ENCODE measurements at regions of chr4 and their contacts with region 1.

Region 1: GRCh38 chr4:164115236-164115635 is 620.7 kb downstream of the TMA16 start:
- DNase-seq: no peak
- ATAC-seq: no peak
- H3K4me3 ChIP-seq: no peak overlapping the region
- H3K4me3 Mint-ChIP-seq: no peak overlapping the region
- H3K27ac ChIP-seq: no peak overlapping the region
- H3K27ac Mint-ChIP-seq: no peak overlapping the region
- H3K4me1 ChIP-seq: no peaks in the 10 kb centered on the region
- H3K4me1 Mint-ChIP-seq: no peaks in the 10 kb centered on the region
- H3K27me3 ChIP-seq: no peaks in the 10 kb centered on the region
- H3K27me3 Mint-ChIP-seq: no peaks in the 10 kb centered on the region
- CTCF ChIP-seq: no peak

Region 2: DNA sequence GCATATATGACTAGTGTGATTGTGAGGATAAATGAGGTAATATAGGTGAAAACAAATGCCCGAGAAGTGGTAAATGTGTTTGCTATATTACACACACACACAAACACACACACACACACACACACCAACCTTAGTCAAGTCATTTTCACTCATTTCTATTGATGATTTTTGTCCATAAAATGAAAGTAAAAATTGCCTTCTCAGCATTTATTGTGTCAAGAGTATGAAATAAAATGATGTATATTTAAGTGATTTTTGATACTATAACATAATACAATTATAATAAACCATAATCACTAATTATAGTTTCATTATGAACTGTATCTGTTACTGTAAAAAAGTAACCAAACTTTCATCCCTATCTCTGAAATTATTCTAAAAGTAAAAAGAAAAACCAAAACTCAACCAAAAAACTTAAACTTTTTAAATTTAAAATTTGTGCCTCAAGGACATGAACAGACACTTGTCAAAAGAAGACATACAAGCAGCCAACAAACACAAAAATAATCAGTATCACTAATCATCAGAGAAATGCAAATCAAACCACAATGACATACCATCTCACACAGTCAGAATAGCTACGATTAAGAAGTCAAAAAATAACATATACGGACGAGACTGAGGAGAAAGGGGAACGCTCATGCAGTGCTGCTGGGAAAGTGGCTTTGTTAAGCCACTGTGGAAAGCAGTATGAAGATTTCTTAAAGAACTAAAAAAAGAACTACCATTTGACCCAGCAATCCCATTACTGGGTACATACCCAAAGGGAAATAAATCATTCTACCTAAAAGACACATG is 19.7 kb before region 1 on chr4:
- CTCF ChIA-PET with region 1: no interaction called
- POLR2A ChIA-PET with region 1: no interaction called
- intact Hi-C with region 1: loop called in 1 of 2 experiments (anchors 2 kb)
- DNase-seq: no peak
- ATAC-seq: no peak
- H3K4me3 ChIP-seq: no peak overlapping the region
- H3K4me3 Mint-ChIP-seq: no peak overlapping the region
- H3K27ac ChIP-seq: no peak overlapping the region
- H3K27ac Mint-ChIP-seq: no peak overlapping the region
- H3K4me1 ChIP-seq: no peaks in the 10 kb centered on the region
- H3K4me1 Mint-ChIP-seq: no peaks in the 10 kb centered on the region
- H3K27me3 ChIP-seq: no peaks in the 10 kb centered on the region
- H3K27me3 Mint-ChIP-seq: no peaks in the 10 kb centered on the region
- CTCF ChIP-seq: no peak